Activated T-helper 1 cell treated with anti-CD3 and anti-CD28 coated beads, Interleukin-12 subunit alpha, Interleukin-12 subunit beta, Interleukin-2, Interleukin-4 antibody, amounts not matched to agents 30 ng/mL and 10 ng/mL and 1 ng/mL, durations not matched to agents 14 hours and 24 hours and 36 hours (primary cell): ENCODE measurements at regions of chr14 and their contacts with region 1.

Region 1: GRCh38 chr14:51094901-51095853 is at the start of gene TRIM9:
- DNase-seq: peak; percentile 84
- H3K4me3 Mint-ChIP-seq: peak within 1 kb of the TSS; percentile 88
- H3K27ac Mint-ChIP-seq: peak within 1 kb of the TSS; percentile 65
- H3K4me1 Mint-ChIP-seq: peaks cover 11% of the 10 kb centered on the region
- H3K27me3 Mint-ChIP-seq: peaks cover 51% of the 10 kb centered on the region
- total RNA-seq, gene TRIM9: 0.31 TPM in 1 of 2 replicates, not detected in the other

Region 2: DNA sequence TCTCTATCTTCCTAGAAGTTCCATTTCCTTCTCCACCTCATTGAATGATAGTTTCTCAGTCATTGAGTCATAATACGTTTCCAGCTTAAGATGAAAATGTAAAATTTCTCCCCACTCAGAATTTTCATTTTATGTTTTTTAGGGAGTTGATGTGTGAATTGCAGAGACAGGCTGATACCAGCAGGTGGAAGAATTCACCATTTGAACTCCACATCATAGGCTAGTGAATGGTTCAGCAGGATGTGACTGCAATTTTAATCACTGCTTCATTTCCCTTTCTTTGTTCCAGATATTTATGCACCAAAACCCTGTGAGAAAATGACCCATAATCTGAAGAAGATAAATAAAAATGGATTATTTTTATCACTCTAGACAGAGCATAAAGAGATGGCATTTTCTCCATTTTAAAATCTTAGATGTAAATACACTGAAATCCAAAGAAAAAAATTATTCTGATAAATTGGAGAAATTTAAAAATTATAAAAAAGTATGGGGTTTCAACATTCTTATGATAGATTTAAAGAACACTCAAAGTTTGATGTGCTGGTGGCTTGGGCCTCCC is 140.3 kb before region 1 on chr14:
- intact Hi-C with region 1: loop called (anchors 10 kb)
- DNase-seq: no peak
- H3K4me3 Mint-ChIP-seq: no peak overlapping the region
- H3K27ac Mint-ChIP-seq: no peak overlapping the region
- H3K4me1 Mint-ChIP-seq: no peaks in the 10 kb centered on the region
- H3K27me3 Mint-ChIP-seq: peaks cover 6% of the 10 kb centered on the region

Region 3: DNA sequence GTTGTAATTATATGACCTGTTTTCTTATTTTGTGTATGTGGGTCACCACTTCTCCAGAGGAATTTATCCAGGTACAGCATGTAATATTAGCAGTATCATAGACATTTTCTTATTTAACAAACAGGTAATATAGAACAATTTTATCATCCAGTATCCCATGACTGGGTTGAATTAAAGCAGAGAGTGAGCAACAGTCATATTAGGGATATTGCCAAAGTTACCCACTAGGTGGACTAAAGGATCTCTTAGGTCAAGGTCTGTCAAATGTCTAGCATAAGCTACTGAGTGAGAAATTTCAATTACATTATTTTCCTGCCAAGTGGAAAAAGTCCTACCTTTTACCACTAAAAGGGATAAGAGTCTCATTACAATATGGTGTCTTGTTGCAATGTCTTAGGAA is 61.8 kb after region 1 on chr14:
- intact Hi-C with region 1: no loop called
- DNase-seq: no peak
- H3K4me3 Mint-ChIP-seq: no peak overlapping the region
- H3K27ac Mint-ChIP-seq: no peak overlapping the region
- H3K4me1 Mint-ChIP-seq: no peaks in the 10 kb centered on the region
- H3K27me3 Mint-ChIP-seq: no peaks in the 10 kb centered on the region

Region 4: DNA sequence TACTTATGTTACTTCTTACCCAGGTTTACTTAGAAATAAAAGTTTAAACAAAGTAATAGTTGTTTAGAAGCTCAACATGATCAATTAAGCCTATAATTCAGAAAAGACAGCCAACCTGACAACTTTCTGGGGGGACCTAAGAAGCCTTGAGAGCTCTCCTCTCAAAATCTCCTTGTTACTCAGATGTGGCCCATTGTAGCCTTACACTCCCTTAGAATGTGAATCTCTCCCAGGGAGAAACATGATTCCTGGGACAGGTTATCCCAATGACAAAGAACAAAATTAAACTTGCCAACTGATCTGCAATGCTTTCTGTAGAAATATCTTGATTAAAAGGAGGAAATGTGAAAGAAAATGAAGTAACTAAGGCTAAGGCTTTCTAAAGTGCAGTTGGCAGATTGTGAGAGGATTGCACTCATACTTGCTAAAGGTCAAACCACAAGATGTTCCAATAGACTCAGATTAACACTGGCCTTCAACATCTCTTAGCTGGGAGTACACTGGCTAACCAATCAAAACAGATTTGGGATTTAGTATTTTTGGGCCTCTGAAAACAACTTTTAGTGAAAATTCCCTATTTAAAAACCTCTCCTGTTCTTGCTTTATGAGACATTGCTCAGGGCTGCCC is 72.5 kb after region 1 on chr14:
- intact Hi-C with region 1: no loop called
- DNase-seq: no peak
- H3K4me3 Mint-ChIP-seq: no peak overlapping the region
- H3K27ac Mint-ChIP-seq: no peak overlapping the region
- H3K4me1 Mint-ChIP-seq: peaks cover 9% of the 10 kb centered on the region
- H3K27me3 Mint-ChIP-seq: no peaks in the 10 kb centered on the region

Region 5: GRCh38 chr14:51219473-51220448 is 124.6 kb after region 1 on chr14:
- intact Hi-C with region 1: loop called (anchors 5 kb)
- DNase-seq: no peak
- H3K4me3 Mint-ChIP-seq: no peak overlapping the region
- H3K27ac Mint-ChIP-seq: no peak overlapping the region
- H3K4me1 Mint-ChIP-seq: no peaks in the 10 kb centered on the region
- H3K27me3 Mint-ChIP-seq: no peaks in the 10 kb centered on the region

Region 6: GRCh38 chr14:51239813-51240803 is 144.9 kb after region 1 on chr14 and contains the start of gene TMX1:
- intact Hi-C with region 1: loop called (anchors 1 kb)
- DNase-seq: peak; percentile 87
- H3K4me3 Mint-ChIP-seq: no peak within 1 kb of the TSS
- H3K27ac Mint-ChIP-seq: no peak within 1 kb of the TSS
- H3K4me1 Mint-ChIP-seq: peaks cover 12% of the 10 kb centered on the region
- H3K27me3 Mint-ChIP-seq: no peaks in the 10 kb centered on the region
- total RNA-seq, gene TMX1: 51.1 and 51.3 TPM in 2 replicates